Activated naive CD4-positive, alpha-beta T cell treated with anti-CD3 and anti-CD28 coated beads, Interleukin-2, amount 10 ng/mL, durations not matched to agents 7 days and 5 days (primary cell): ENCODE measurements at regions of chr15 and their contacts with region 1.

Region 1: DNA sequence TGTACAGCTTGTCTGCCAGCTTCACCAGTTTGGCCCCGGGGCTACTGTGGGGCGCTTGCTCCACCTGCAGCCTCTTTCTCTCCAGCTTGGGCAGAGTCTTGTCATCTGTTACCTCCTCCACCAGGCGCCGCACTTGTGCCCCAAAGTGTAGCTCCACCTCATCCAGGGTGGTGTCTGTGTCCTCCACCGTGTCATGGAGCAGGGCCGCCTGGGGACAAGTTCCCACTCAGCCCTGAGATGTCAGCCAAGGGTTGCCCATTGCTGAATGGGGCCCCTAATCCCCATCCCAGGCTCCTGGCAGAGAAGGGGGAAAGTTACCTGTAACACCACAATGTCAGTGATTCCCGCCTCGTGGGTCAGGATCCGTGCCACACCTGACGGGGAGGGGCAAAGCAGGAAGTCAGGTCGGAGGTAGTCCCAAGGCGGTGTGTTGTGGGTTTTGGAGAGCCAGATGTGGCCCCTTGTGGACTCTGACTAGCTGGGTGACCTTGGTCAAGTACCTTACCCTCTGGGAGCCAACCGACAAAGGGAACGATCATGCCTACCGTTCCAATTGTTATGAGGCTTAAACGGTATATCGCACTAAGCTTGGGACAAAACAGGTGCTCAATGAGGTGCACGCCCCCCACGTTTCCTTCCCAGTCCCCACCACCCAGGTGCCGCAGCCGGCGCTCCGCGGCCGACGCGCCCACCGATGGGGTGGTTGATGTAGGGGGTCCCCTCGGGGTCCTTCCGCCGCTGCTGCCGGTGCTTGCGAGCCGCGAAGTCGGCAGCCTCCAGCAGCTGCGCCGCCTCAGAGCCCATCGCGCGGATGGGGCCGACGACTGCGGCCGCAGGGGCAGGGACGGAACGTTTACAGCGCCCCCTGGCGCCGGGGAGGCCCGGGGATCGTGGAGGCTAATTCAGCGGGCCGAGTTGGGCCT is at the start of gene HDDC3:
- DNase-seq: peak; percentile 93
- H3K4me3 Mint-ChIP-seq: peak within 1 kb of the TSS; percentile 98
- H3K27ac Mint-ChIP-seq: peak within 1 kb of the TSS; percentile 100
- H3K4me1 Mint-ChIP-seq: peaks cover 70% of the 10 kb centered on the region
- H3K27me3 Mint-ChIP-seq: no peaks in the 10 kb centered on the region

Region 2: GRCh38 chr15:90291679-90292356 is 640.2 kb before region 1 on chr15:
- CTCF ChIA-PET with region 1: interaction called, 12 read pairs
- DNase-seq: peak; percentile 44
- H3K4me3 Mint-ChIP-seq: no peak overlapping the region
- H3K27ac Mint-ChIP-seq: no peak overlapping the region
- H3K4me1 Mint-ChIP-seq: peaks cover 9% of the 10 kb centered on the region
- H3K27me3 Mint-ChIP-seq: peaks cover 24% of the 10 kb centered on the region

Region 3: DNA sequence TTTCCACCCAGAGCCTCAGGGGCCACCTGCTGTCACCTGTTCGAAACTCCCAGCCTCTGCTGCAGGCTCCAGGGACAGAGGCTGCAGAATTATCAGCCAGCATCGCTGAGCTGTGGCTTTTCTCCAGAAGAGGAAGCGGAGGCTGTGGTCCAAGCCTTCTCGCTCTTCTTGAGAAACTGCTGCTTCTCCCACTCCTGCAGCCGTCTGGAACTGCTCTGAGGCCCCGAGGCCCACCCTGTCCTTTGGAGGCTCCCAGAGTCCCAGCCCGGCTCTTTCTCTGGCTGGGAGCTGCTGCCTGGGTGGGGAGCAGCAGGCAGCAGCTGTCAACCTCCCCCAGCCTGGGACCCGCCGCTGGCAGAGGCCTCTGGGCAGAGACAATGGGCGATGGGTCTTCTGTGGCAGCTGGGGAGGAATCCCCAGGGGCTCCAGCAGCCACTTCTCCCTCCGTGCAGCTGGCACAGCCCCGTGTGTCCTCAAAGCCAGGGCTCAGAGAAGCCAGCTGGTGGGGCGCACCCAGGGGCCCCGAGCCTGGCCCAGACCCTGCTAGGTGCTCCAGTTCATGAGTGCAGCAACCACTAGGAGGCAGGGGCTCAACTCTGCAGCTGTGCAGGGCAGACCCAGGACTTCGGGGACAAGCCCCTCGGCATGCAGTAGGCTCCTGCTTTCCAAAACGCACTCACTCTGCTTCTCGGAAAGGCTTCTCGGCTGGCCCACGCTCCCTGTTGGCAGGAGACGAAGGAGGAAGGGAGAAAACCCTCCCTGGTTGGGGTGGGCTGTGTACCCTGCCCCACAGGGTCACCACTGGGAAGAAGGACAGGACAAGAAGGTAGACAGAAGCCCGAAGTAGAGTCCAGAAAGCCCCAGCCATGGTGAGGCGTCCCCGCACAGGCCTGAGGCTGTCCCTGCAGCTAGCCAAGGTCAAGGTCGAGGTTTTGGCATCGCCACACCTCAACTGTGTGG is 113.5 kb before region 1 on chr15:
- CTCF ChIA-PET with region 1: interaction called, 19 read pairs
- DNase-seq: peak; percentile 41
- H3K4me3 Mint-ChIP-seq: no peak overlapping the region
- H3K27ac Mint-ChIP-seq: peak overlapping the region; percentile 83
- H3K4me1 Mint-ChIP-seq: peaks cover 67% of the 10 kb centered on the region
- H3K27me3 Mint-ChIP-seq: no peaks in the 10 kb centered on the region

Region 4: DNA sequence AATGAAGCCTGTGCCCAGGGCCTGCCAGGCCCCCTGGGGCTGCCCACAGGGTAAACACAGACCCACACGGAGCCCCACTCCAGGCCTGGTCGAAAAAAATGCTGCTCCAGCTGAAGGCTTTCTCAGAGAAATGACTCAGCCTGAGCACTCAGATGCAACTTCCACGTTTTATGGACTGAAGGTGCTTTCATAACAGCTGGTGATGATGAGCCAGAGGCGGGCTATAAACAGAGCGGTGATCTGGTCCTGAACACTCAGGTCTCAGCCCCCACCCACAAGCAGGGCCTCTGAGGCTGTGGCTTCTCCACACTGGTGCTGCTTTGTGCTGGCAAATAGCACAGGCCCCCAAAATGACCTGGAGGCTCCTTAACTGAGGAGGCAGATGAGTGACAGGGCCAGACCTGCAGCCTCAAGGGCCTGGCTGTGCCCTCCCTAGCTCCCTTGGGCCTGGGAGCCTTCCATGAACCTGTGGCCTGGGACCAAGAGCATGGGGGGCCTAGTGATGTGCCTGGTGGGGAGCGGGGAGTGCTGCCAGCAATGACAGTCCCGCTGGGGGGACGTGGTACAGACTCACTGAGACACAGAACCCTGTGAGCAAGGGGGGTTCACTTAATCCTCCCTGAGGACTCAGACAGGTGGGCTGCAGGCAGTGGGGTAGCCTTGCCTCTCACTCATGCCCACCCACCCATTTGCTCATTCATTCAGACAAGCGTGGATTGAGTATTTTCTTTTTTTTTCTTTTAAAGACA is 86.6 kb before region 1 on chr15:
- CTCF ChIA-PET with region 1: no interaction called
- DNase-seq: peak; percentile 37
- H3K4me3 Mint-ChIP-seq: no peak overlapping the region
- H3K27ac Mint-ChIP-seq: peak overlapping the region; percentile 11
- H3K4me1 Mint-ChIP-seq: peaks cover 60% of the 10 kb centered on the region
- H3K27me3 Mint-ChIP-seq: peaks cover 4% of the 10 kb centered on the region

Region 5: GRCh38 chr15:90895336-90896117 is 36.5 kb before region 1 on chr15:
- CTCF ChIA-PET with region 1: interaction called, 160 read pairs
- DNase-seq: no peak
- H3K4me3 Mint-ChIP-seq: no peak overlapping the region
- H3K27ac Mint-ChIP-seq: no peak overlapping the region
- H3K4me1 Mint-ChIP-seq: peaks cover 3% of the 10 kb centered on the region
- H3K27me3 Mint-ChIP-seq: peaks cover 4% of the 10 kb centered on the region

Region 6: GRCh38 chr15:90915808-90916440 is 16.1 kb before region 1 on chr15:
- CTCF ChIA-PET with region 1: interaction called, 20 read pairs
- DNase-seq: no peak
- H3K4me3 Mint-ChIP-seq: no peak overlapping the region
- H3K27ac Mint-ChIP-seq: no peak overlapping the region
- H3K4me1 Mint-ChIP-seq: no peaks in the 10 kb centered on the region
- H3K27me3 Mint-ChIP-seq: no peaks in the 10 kb centered on the region

Region 7: DNA sequence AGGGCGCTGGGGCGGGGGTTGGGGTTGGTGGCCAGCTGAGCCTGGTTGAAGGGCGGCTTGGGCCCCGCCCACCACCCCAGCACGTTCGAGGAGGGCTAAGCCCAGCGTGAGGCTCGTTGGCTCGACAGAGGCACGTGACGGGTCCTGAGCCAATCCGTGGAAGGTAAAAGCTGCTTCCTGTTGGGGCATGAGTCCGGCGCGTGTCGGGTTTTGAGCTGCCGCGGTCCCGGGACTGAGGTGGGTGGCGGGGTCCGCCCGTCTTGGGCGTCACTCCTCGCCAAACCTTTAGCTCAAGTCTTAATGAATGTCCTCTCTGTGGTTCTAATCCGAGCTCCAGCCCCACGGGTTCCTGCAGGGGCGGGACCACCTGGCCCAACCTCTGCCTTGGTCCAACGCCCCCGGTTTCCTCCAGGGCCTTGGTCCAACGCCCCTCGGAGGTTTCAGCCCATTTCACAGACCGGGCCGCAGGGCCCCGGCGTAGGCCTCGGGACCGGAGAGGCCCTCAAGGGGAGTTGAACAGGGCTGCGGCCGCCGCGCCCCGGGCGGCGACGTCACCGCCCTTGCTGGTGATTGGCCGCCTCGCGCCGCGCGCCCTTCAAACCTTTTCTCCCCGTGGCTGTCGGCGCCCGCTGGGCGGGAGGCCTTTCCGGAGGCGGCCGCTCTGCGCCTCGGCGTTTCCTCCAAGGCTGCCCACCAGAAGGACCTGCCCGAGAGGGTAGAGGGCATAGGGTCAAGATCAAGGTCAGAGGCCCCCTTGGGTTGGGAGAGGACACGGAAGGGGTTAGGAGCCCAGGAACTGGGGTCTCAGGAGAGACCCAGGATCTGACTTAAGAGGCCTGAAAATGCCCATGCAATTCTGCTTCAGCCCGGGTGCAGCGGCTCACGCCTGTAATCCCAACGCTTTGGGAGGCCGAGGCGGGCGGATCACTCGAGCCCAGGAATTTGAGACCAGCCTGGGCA is 23.0 kb after region 1 on chr15 and contains the start of gene RCCD1:
- CTCF ChIA-PET with region 1: interaction called, 77 read pairs
- DNase-seq: peak; percentile 96
- H3K4me3 Mint-ChIP-seq: peak within 1 kb of the TSS; percentile 85
- H3K27ac Mint-ChIP-seq: peak within 1 kb of the TSS; percentile 96
- H3K4me1 Mint-ChIP-seq: peaks cover 27% of the 10 kb centered on the region
- H3K27me3 Mint-ChIP-seq: no peaks in the 10 kb centered on the region